MCF 10A (cell line): ENCODE measurements at regions of chr9 and their contacts with region 1.

Region 1: GRCh38 chr9:36450110-36450732 is 50.2 kb upstream of the RNF38 start:
- DNase-seq: peak; percentile 74
- H3K4me3 Mint-ChIP-seq: no peak overlapping the region
- H3K27ac Mint-ChIP-seq: no peak overlapping the region
- H3K4me1 Mint-ChIP-seq: no peaks in the 10 kb centered on the region
- H3K27me3 Mint-ChIP-seq: no peaks in the 10 kb centered on the region
- CTCF ChIP-seq: peak; percentile 64

Region 2: DNA sequence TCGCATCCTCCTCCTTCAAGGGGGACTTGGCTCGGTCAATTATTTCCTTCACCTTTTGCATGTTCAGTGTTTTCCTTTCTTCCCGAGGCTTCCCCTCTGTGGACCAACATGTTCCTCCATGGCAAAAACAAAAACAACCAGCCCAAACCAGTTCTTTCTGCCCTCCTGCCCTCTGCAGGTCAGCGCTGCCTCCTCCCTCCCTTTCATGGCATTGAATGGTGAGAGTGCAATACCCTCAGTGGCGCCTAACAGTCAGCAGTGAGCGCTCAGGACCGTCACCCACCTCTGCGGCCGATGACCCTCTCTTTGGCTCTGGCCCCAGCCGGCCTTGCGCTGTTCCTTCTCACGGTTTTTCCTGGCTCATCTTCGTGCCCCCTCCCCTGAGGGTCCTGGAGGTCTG is 157.6 kb before region 1 on chr9:
- CTCF ChIA-PET with region 1: no interaction called
- POLR2A ChIA-PET with region 1: no interaction called
- intact Hi-C with region 1: no loop called
- DNase-seq: no peak
- H3K4me3 Mint-ChIP-seq: no peak overlapping the region
- H3K27ac Mint-ChIP-seq: no peak overlapping the region
- H3K4me1 Mint-ChIP-seq: peaks cover 6% of the 10 kb centered on the region
- H3K27me3 Mint-ChIP-seq: no peaks in the 10 kb centered on the region
- CTCF ChIP-seq: no peak

Region 3: DNA sequence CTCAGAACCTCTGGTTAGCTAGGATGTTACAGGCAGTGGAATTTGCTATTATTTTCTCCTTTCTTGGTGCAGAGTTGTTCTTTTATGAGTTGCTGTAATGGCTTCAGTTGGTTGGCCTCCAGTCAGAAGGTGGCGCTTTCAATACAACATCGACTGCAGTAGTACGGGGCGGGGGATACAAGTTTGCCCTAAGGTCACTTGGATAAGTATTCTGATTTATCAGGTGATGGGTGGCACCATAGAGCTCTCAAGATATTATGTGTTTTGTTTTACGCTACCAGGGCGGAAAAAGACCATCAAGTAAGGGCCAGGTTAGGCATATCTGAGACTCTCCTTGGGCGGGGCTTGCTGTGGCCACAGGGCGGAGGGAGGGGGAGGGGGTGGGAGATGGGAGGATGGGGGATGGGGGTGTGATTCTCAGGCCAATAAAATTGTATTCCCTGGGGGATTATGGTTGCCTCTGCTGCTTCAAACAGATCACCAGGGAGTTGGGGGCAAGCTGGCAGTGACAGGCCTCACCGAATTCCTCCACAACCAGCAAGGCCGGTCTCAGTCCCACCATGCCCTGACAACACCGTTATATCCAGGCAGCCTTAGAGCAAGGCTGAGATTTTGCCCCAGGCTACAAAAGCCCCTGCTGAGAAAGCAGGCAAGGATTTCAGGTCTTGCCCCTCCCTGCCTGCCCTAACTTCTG is 34.3 kb before region 1 on chr9:
- CTCF ChIA-PET with region 1: interaction called, 20 read pairs
- POLR2A ChIA-PET with region 1: no interaction called
- intact Hi-C with region 1: no loop called
- DNase-seq: no peak
- H3K4me3 Mint-ChIP-seq: no peak overlapping the region
- H3K27ac Mint-ChIP-seq: no peak overlapping the region
- H3K4me1 Mint-ChIP-seq: peaks cover 18% of the 10 kb centered on the region
- H3K27me3 Mint-ChIP-seq: no peaks in the 10 kb centered on the region
- CTCF ChIP-seq: no peak

Region 4: DNA sequence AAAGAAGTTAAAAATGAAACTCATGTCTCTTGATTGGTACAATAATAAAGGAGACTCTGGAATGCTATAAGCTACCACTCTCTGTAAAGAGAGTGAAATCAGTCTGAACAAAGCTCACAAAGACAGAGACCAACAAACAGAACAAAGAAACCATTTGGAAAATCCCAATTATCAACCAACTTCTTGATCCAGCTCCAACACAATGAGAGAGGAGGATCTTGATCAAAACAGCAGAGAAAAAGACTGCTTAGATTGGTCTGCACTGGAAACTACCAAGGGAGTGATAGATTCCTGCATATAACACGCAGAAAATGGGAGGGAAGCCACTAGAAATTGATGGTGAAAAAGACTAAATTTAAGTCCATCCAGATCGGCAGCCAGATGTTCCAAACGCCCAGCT is 27.0 kb before region 1 on chr9:
- CTCF ChIA-PET with region 1: interaction called, 20 read pairs
- POLR2A ChIA-PET with region 1: no interaction called
- intact Hi-C with region 1: no loop called
- DNase-seq: no peak
- H3K4me3 Mint-ChIP-seq: no peak overlapping the region
- H3K27ac Mint-ChIP-seq: no peak overlapping the region
- H3K4me1 Mint-ChIP-seq: peaks cover 28% of the 10 kb centered on the region
- H3K27me3 Mint-ChIP-seq: no peaks in the 10 kb centered on the region
- CTCF ChIP-seq: no peak

Region 5: DNA sequence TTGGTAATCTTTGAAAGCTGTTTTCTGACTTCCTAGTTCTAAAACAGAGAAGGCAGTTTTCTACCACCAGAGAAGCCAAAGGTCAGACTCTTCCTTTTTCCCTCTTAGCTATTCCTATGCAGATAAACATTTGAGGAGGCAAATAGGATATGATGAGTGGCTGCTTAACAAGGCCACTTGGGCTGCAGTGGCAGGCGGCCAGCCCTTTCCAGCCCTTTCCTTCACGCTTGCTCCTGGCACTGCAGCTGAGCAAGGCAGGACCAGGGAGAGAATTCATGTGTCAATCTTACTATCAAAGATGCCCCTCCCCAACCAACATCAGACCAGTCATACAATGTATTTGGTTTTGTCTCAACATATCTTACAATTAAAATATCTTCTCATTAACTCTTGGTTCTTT is 13.3 kb before region 1 on chr9:
- CTCF ChIA-PET with region 1: interaction called, 32 read pairs
- POLR2A ChIA-PET with region 1: interaction called, 4 read pairs
- intact Hi-C with region 1: no loop called
- DNase-seq: no peak
- H3K4me3 Mint-ChIP-seq: no peak overlapping the region
- H3K27ac Mint-ChIP-seq: no peak overlapping the region
- H3K4me1 Mint-ChIP-seq: peaks cover 4% of the 10 kb centered on the region
- H3K27me3 Mint-ChIP-seq: no peaks in the 10 kb centered on the region
- CTCF ChIP-seq: no peak

Region 6: GRCh38 chr9:36462245-36462644 is 12.0 kb after region 1 on chr9:
- CTCF ChIA-PET with region 1: interaction called, 10 read pairs
- POLR2A ChIA-PET with region 1: no interaction called
- intact Hi-C with region 1: no loop called
- DNase-seq: no peak
- H3K4me3 Mint-ChIP-seq: no peak overlapping the region
- H3K27ac Mint-ChIP-seq: no peak overlapping the region
- H3K4me1 Mint-ChIP-seq: peaks cover 5% of the 10 kb centered on the region
- H3K27me3 Mint-ChIP-seq: no peaks in the 10 kb centered on the region
- CTCF ChIP-seq: no peak

Region 7: GRCh38 chr9:36551129-36551528 is 100.9 kb after region 1 on chr9:
- CTCF ChIA-PET with region 1: interaction called, 17 read pairs
- POLR2A ChIA-PET with region 1: interaction called, 4 read pairs
- intact Hi-C with region 1: loop called (anchors 1 kb)
- DNase-seq: no peak
- H3K4me3 Mint-ChIP-seq: no peak overlapping the region
- H3K27ac Mint-ChIP-seq: no peak overlapping the region
- H3K4me1 Mint-ChIP-seq: peaks cover 5% of the 10 kb centered on the region
- H3K27me3 Mint-ChIP-seq: peaks cover 24% of the 10 kb centered on the region
- CTCF ChIP-seq: no peak

Region 8: GRCh38 chr9:36560857-36561221 is 110.6 kb after region 1 on chr9:
- CTCF ChIA-PET with region 1: interaction called, 17 read pairs
- POLR2A ChIA-PET with region 1: no interaction called
- intact Hi-C with region 1: no loop called
- DNase-seq: peak; percentile 37
- H3K4me3 Mint-ChIP-seq: no peak overlapping the region
- H3K27ac Mint-ChIP-seq: no peak overlapping the region
- H3K4me1 Mint-ChIP-seq: peaks cover 10% of the 10 kb centered on the region
- H3K27me3 Mint-ChIP-seq: no peaks in the 10 kb centered on the region
- CTCF ChIP-seq: no peak